HepG2 (cell line): ENCODE measurements at regions of chr20 and their contacts with region 1.

Region 1: DNA sequence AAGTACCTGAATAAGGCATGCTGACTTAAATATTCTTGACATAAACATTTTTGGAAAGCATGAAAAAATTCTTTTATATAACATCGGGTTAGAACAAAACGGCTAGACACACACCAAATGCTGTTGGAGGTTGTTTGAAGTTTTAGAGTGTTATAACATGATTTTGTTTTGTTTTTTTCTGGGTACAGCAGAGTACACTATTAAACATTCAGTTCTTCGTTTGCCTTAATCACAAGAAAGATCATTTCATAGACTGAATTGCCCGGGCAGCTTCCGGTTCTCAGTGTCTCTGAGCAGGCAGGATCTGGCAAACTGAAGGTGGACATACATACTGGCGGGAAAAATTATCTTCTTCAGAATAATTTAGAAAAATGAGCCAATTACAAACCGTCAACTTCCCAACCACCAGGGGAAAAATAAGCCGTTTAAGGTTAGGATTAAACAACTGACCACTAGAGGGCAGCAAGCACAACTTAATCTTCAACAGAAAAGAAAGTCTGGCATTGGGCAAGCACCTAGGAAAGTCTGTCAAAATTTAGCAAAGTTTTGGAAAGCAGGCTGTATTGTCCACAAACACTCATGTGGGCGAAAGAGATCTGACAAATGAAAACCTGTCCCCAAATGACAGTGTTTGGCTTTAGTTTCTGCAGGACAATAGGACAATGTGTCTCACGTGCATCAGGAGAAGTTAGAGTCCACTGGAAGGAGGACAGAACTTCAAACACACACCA is 15.0 kb downstream of the ZNF217 start:
- DNase-seq: peak; percentile 94
- ATAC-seq: peak; percentile 45
- H3K4me3 ChIP-seq: peak overlapping the region; percentile 12 to 43 (median 38); a peak in 4 of 6 replicates
- H3K27ac ChIP-seq: peak overlapping the region; percentile 77
- H3K4me1 ChIP-seq: peaks cover 63% of the 10 kb centered on the region
- H3K27me3 ChIP-seq: no peaks in the 10 kb centered on the region
- CTCF ChIP-seq: peak; percentile 93
- EP300 ChIP-seq: peak in 1 of 2 experiments; percentile 33; a peak in 1 of 4 replicates
- POLR2A ChIP-seq: peak in 1 of 2 experiments; percentile 34; a peak in 1 of 4 replicates
- RAD21 ChIP-seq: peak; percentile 96

Region 2: DNA sequence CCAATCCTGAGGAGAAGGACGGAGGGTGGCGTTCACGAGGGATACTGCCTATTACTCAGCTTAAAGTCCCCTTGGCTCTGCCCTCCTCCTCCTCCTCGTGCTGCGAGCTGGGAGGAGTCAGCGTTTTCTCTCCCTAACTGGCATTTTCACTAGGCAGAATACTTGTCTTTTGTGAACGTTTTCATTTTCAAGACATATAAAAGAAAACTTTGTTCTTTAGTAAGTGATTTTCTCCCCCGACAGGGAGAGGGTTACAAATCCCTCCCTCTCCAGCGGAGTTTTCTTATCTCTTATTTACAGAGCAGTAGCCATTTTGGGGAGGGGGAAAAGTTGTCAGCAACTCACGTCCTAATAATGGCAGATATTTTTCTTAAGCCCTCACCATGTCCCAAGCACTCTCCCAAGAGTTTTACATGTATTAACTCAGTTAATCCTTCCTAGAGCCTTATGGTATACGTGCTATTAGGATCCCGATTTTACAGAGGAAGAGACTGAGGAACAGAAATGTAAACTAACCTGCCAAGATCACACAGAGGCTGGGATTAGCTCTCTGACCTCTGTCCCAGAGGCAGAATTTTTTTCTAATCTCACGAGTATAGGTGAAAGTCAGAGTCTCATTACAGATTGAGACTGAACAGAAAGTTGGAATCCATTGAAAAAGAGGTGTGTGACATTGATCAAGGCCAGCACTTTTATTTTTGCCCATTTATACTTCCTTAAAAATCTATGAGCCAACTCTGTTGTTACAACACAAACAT is 45.0 kb after region 1 on chr20:
- CTCF ChIA-PET with region 1: interaction called, 3 read pairs
- POLR2A ChIA-PET with region 1: interaction called, 37 read pairs
- in situ Hi-C with region 1: no loop called
- intact Hi-C with region 1: loop called (anchors 1 kb)
- DNase-seq: peak; percentile 77
- ATAC-seq: peak; percentile 88
- H3K4me3 ChIP-seq: peak overlapping the region; percentile 54 to 66 (median 66)
- H3K27ac ChIP-seq: peak overlapping the region; percentile 93
- H3K4me1 ChIP-seq: peaks cover 38% of the 10 kb centered on the region
- H3K27me3 ChIP-seq: no peaks in the 10 kb centered on the region
- CTCF ChIP-seq: peak; percentile 46
- EP300 ChIP-seq: peak in 1 of 2 experiments; percentile 64; a peak in 1 of 4 replicates
- POLR2A ChIP-seq: peak; percentile 78 to 81
- RAD21 ChIP-seq: peak; percentile 22; the same call in 1 of the 2 replicates

Region 3: DNA sequence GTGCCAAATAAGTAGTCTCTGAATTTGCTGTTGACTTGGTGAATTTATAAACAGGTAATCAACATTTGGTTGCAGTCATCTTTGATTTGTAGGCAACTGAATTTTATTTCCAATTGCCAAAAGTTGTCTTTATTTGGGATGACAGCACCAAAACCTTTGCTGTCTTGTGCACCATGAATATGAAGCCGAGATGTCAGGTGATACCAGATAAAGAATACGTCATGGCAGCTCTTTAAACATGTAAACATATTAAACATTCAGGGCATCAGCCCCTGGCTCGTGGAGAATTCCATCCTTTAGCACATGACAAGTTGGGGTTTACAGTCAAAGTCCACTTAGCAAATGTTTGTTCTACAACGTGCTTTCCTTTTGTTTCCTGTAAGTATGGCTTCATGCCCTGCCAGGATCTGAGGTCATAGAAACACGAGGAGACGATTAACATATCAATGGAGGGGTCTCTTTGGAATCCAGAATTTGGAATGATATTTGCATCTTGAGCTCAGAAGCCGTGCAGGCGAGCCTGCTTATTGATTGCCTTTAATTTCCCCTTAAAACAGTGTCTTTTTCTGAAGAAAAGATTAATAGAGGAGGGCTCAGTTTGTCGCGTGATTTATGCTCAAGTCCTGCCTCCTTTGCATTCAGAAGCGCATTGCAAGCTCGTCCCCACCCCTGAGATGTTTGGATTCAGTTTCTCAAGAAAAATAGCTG is 185.2 kb after region 1 on chr20:
- CTCF ChIA-PET with region 1: no interaction called
- POLR2A ChIA-PET with region 1: interaction called, 19 read pairs
- in situ Hi-C with region 1: no loop called
- intact Hi-C with region 1: loop called (anchors 2 kb)
- DNase-seq: peak; percentile 100
- ATAC-seq: peak; percentile 95
- H3K4me3 ChIP-seq: no peak overlapping the region; a peak in 1 of 6 replicates
- H3K27ac ChIP-seq: peak overlapping the region; percentile 89
- H3K4me1 ChIP-seq: peaks cover 77% of the 10 kb centered on the region
- H3K27me3 ChIP-seq: no peaks in the 10 kb centered on the region
- CTCF ChIP-seq: no peak
- EP300 ChIP-seq: peak; percentile 95 to 99; a peak in 3 of 4 replicates
- POLR2A ChIP-seq: peak; percentile 26 to 48; a peak in 2 of 4 replicates
- RAD21 ChIP-seq: 0 out of 2 replicates have a peak, but pooled peaks have one; percentile 15

Region 4: GRCh38 chr20:53915446-53916172 is 337.0 kb after region 1 on chr20:
- CTCF ChIA-PET with region 1: interaction called, 54 read pairs
- POLR2A ChIA-PET with region 1: interaction called, 21 read pairs
- in situ Hi-C with region 1: loop called (anchors 5 kb)
- intact Hi-C with region 1: loop called (anchors 1 kb)
- DNase-seq: peak; percentile 84
- ATAC-seq: peak; percentile 92
- H3K4me3 ChIP-seq: peak overlapping the region; percentile 73 to 88 (median 80)
- H3K27ac ChIP-seq: peak overlapping the region; percentile 17
- H3K4me1 ChIP-seq: peaks cover 48% of the 10 kb centered on the region
- H3K27me3 ChIP-seq: peaks cover 0 to 2% of the 10 kb centered on the region in 2 experiments; a peak in 1 of 5 replicates
- CTCF ChIP-seq: peak; percentile 96
- EP300 ChIP-seq: no peak; a peak in 1 of 4 replicates
- POLR2A ChIP-seq: no peak
- RAD21 ChIP-seq: peak; percentile 83

Region 5: DNA sequence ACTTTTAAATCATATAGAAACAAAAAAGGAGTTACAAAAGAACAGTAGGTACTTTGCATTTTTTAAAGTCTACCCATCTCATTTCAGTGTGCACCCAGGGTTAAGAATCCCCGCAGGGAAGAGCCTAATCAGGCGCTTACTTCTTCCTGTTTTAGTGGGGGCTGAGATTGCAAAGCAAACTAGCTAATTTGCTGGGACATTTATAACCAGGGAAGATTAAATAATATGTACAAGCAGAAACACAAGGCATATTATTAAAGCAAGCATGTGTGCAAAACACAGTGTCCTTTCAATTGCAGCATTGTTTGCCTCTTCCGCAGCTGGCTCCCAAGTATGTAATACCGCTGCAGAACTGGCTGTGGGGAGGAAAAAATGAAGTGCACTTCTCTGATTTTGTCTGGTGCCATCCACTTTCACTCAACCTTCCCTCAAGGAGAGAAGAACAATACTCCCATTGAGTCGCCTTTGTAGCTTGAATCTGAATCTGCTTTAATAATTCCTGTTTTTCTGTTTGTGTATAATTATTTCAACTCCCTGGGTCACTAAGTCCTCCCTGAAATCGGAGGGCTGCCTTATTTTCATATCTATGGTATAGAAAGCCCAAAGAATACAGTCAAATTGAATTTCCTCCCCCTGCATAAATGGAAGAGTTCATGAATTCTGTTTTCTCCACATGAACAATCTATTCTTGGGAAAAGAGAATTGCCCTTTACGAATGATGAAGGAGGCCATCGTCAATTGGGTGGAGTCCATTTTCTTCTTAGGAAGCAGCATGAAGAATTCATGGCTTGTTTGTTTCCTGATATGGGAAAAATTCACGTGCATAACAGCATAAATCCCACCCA is 515.0 kb after region 1 on chr20:
- CTCF ChIA-PET with region 1: no interaction called
- POLR2A ChIA-PET with region 1: no interaction called
- in situ Hi-C with region 1: loop called (anchors 10 kb)
- intact Hi-C with region 1: no loop called
- DNase-seq: no peak
- ATAC-seq: no peak
- H3K4me3 ChIP-seq: no peak overlapping the region
- H3K27ac ChIP-seq: no peak overlapping the region
- H3K4me1 ChIP-seq: peaks cover 23% of the 10 kb centered on the region
- H3K27me3 ChIP-seq: peaks cover 0 to 6% of the 10 kb centered on the region in 2 experiments; a peak in 1 of 5 replicates
- CTCF ChIP-seq: no peak
- EP300 ChIP-seq: no peak
- POLR2A ChIP-seq: no peak
- RAD21 ChIP-seq: no peak

Region 6: DNA sequence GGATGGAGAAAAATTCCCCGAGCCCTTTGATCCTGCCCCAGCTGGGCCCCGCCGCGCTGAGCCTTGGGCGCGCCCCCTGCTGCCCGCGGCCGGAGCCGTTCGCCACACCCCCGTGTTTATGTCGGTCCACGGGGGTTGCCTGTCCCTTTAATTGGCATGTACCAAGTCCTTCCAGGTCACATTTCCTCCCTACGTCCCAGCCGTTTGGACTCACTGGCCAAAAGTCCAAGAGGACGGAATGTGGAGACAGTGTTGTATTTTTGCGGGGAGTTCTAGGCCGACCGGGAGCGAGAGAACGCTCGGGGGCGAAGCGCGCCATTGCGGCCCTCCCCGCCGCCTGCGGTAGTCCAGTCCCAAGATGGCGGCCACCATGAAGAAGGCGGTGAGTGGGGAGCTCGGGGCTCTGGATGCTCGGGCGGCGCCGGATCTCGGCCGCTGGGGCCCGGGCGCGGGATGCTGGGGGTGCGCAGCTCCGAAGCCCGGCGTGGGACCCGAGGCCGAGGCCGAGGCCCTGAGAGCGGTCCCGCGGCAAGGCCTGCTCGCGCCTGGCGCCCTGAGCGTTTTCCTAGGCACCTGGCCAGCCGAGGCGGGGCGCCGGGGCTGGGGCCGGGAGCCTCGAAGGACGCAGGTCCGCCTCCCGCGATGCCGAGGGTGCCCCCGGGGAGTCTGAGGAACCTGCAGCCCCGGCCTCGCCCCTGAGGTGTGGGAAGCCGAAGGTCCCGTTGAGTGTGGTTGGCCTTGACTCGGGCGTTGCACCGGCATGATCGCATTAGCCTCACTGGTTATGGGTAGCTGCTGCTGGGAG is 629.3 kb after region 1 on chr20 and contains the start of gene PFDN4:
- CTCF ChIA-PET with region 1: no interaction called
- POLR2A ChIA-PET with region 1: no interaction called
- in situ Hi-C with region 1: loop called (anchors 10 kb)
- intact Hi-C with region 1: no loop called
- DNase-seq: peak; percentile 88
- ATAC-seq: peak; percentile 95
- H3K4me3 ChIP-seq: peak within 1 kb of the TSS; percentile 77 to 100 (median 82)
- H3K27ac ChIP-seq: peak within 1 kb of the TSS; percentile 97
- H3K4me1 ChIP-seq: peaks cover 50% of the 10 kb centered on the region
- H3K27me3 ChIP-seq: peaks cover 0 to 6% of the 10 kb centered on the region in 2 experiments; a peak in 1 of 5 replicates
- CTCF ChIP-seq: peak; percentile 99
- EP300 ChIP-seq: peak; percentile 43 to 61; a peak in 3 of 4 replicates
- POLR2A ChIP-seq: peak; percentile 59 to 80; a peak in 3 of 4 replicates
- RAD21 ChIP-seq: peak; percentile 63
- total RNA-seq, gene PFDN4: 227 and 299 TPM in 2 replicates